ENCODE measurements at regions of chr12 and their contacts with region 1.

Region 1: GRCh38 chr12:54379401-54380201 is 4.9 kb downstream of the ZNF385A start:
- DNase-seq: peak; percentile 83 to 86 (median 84)
- H3K4me3 ChIP-seq: peak overlapping the region in 1 of 2 donors; percentile 38
- H3K4me3 Mint-ChIP-seq: peak overlapping the region; percentile 31 to 75 (median 62)
- H3K27ac ChIP-seq: no peak overlapping the region
- H3K27ac Mint-ChIP-seq: peak overlapping the region in 3 of 7 donors; percentile 24 to 44 (median 41)
- H3K4me1 ChIP-seq: peaks cover 4% of the 10 kb centered on the region
- H3K4me1 Mint-ChIP-seq: peaks cover 3 to 7% (median 5%) of the 10 kb centered on the region in 4 donors
- H3K27me3 ChIP-seq: no peaks in the 10 kb centered on the region
- H3K27me3 Mint-ChIP-seq: no peaks in the 10 kb centered on the region

Region 2: DNA sequence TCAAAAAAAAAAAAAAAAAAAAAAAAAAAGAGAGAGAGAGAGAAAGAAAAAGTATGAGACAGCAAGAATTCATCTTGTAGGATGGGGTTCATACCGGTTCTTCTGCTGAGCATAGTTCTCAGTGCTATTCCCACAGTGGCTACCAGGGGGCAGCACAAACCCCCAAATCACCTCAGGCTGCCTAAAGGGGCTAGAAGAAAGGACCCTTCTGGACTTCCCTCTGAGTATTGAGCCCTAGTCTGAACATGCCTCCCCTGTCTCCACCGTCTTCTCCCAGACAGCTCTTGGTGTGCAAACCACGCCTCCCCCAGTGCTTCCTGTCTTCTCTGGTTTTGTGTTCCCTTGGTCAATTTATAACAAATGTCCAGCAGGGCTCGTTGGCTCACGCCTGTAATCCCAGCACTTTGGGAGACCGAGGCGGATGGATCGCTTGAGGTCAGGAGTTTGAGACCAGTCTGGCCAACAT is 159.5 kb before region 1 on chr12:
- CTCF ChIA-PET with region 1: interaction called, 18 read pairs
- POLR2A ChIA-PET with region 1: no interaction called
- intact Hi-C with region 1: no loop called
- DNase-seq: peak; percentile 51 to 66 (median 56)
- H3K4me3 ChIP-seq: no peak overlapping the region
- H3K4me3 Mint-ChIP-seq: no peak overlapping the region
- H3K27ac ChIP-seq: no peak overlapping the region
- H3K27ac Mint-ChIP-seq: no peak overlapping the region
- H3K4me1 ChIP-seq: peaks cover 26% of the 10 kb centered on the region
- H3K4me1 Mint-ChIP-seq: peaks cover 16 to 34% (median 24%) of the 10 kb centered on the region in 4 donors
- H3K27me3 ChIP-seq: no peaks in the 10 kb centered on the region
- H3K27me3 Mint-ChIP-seq: no peaks in the 10 kb centered on the region

Region 3: GRCh38 chr12:54294152-54294952 is 85.2 kb before region 1 on chr12:
- CTCF ChIA-PET with region 1: interaction called, 53 read pairs
- POLR2A ChIA-PET with region 1: interaction called, 3 read pairs
- intact Hi-C with region 1: no loop called
- DNase-seq: peak; percentile 40 to 50 (median 45)
- H3K4me3 ChIP-seq: no peak overlapping the region
- H3K4me3 Mint-ChIP-seq: no peak overlapping the region
- H3K27ac ChIP-seq: no peak overlapping the region
- H3K27ac Mint-ChIP-seq: no peak overlapping the region
- H3K4me1 ChIP-seq: peaks cover 7% of the 10 kb centered on the region
- H3K4me1 Mint-ChIP-seq: peaks cover 4 to 8% (median 6%) of the 10 kb centered on the region in 4 donors
- H3K27me3 ChIP-seq: no peaks in the 10 kb centered on the region
- H3K27me3 Mint-ChIP-seq: peaks cover 2 to 10% of the 10 kb centered on the region in 2 donors

Region 4: DNA sequence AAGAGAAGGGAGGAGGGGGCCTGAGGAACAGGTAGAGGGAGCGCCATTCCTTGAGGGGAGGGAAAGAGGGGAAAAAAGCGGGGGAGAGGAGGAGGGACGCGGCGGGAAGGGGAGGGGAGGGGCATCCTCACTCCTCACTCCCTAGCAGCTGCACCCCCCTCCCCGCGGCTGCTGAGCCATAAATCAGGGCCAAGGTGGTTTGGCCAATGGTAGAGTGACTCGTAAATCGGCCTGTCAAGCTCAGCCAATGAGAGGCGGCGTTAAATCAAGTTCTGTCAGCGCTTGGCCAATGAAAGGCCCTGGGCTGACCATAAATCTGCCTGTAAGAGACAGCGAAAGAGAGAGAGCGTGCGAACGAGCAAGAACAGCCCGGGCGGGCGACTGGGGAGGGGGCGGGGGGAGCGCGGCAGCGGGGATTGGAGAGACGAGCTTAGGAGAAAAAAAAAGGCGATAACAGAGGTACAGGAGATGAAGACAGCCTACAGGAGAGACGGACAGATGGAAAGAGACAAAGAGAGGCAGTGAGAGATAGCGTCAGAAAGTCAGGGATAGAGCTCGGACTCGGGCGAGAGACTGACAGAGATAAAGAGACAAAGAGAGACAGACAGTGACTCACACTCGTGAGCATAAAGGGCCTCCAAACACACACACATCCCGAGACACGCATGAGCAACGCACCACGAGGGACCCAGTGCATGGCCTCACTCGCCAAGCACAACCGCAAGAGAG is 20.4 kb before region 1 on chr12:
- CTCF ChIA-PET with region 1: interaction called, 15 read pairs
- POLR2A ChIA-PET with region 1: no interaction called
- intact Hi-C with region 1: no loop called
- DNase-seq: peak; percentile 93 to 99 (median 95)
- H3K4me3 ChIP-seq: peak overlapping the region; percentile 87 to 91
- H3K4me3 Mint-ChIP-seq: no peak overlapping the region
- H3K27ac ChIP-seq: peak overlapping the region; percentile 95
- H3K27ac Mint-ChIP-seq: no peak overlapping the region
- H3K4me1 ChIP-seq: peaks cover 36% of the 10 kb centered on the region
- H3K4me1 Mint-ChIP-seq: peaks cover 10 to 19% (median 14%) of the 10 kb centered on the region in 4 donors
- H3K27me3 ChIP-seq: no peaks in the 10 kb centered on the region
- H3K27me3 Mint-ChIP-seq: no peaks in the 10 kb centered on the region

Region 5: GRCh38 chr12:54398995-54399793 is 19.6 kb after region 1 on chr12:
- CTCF ChIA-PET with region 1: interaction called, 108 read pairs
- POLR2A ChIA-PET with region 1: interaction called, 3 read pairs
- intact Hi-C with region 1: no loop called
- DNase-seq: peak; percentile 82 to 88 (median 85)
- H3K4me3 ChIP-seq: no peak overlapping the region
- H3K4me3 Mint-ChIP-seq: no peak overlapping the region
- H3K27ac ChIP-seq: no peak overlapping the region
- H3K27ac Mint-ChIP-seq: peak overlapping the region in 5 of 7 donors; percentile 65 to 79 (median 76)
- H3K4me1 ChIP-seq: peaks cover 9% of the 10 kb centered on the region
- H3K4me1 Mint-ChIP-seq: peaks cover 7 to 31% (median 14%) of the 10 kb centered on the region in 4 donors
- H3K27me3 ChIP-seq: no peaks in the 10 kb centered on the region
- H3K27me3 Mint-ChIP-seq: no peaks in the 10 kb centered on the region

Region 6: GRCh38 chr12:54439521-54440255 is 60.1 kb after region 1 on chr12:
- CTCF ChIA-PET with region 1: interaction called, 11 read pairs
- POLR2A ChIA-PET with region 1: no interaction called
- intact Hi-C with region 1: no loop called
- DNase-seq: peak in 4 of 5 donors; percentile 57 to 66 (median 64)
- H3K4me3 ChIP-seq: no peak overlapping the region
- H3K4me3 Mint-ChIP-seq: no peak overlapping the region
- H3K27ac ChIP-seq: no peak overlapping the region
- H3K27ac Mint-ChIP-seq: peak overlapping the region in 6 of 7 donors; percentile 2 to 82 (median 42)
- H3K4me1 ChIP-seq: no peaks in the 10 kb centered on the region
- H3K4me1 Mint-ChIP-seq: peaks cover 3 to 6% (median 4%) of the 10 kb centered on the region in 4 donors
- H3K27me3 ChIP-seq: no peaks in the 10 kb centered on the region
- H3K27me3 Mint-ChIP-seq: peaks cover 0 to 2% of the 10 kb centered on the region in 2 donors

Measured in CD4-positive, alpha-beta memory T cell (primary cell).